Left ventricle myocardium inferior (tissue), 1 donor: ENCODE measurements at regions of chr4 and their contacts with region 1.

Region 1: DNA sequence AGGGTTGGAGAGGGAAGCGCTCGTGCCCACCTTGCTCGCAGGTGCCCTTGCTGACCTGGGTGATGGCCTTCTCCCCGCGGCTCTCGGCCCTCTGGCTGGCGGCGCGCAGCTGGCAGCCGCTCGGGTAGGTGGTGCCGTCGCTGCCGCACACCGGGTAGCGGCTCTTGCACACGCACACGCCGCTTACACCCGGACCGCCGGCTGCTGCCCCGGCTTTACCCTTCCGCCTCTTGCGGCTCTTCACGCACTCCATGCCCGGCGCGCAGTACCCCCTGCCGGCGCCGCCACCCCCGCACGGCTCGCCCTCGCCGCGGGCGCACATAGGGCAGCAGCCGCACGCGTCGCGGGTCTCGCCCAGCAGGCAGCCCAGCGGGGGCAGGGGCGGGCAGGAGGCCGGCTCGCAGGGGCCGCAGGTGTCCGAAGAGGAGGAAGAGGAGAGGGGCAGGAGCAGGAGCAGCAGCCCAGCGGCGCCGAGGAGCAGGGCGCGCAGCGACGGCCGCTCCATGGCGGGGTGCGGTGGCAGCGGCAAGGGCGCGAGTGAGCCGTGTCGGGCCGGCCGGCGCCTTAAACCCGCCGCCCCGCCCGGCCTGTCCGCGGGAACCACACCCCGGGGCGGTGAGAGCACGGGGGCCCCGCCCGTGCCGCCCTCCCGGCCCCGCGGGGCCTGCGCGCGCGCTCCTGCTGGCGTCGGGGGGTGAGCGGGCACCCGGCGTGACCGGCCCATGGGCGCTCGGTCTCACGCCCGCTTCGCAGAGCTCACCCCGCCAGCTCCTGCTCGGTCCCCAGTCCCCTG is at the start of gene IGFBP7:
- DNase-seq: peak; percentile 74
- H3K4me3 ChIP-seq: peak within 1 kb of the TSS; percentile 93
- H3K27ac ChIP-seq: peak within 1 kb of the TSS; percentile 98
- H3K4me1 ChIP-seq: peaks cover 68% of the 10 kb centered on the region
- H3K27me3 ChIP-seq: no peaks in the 10 kb centered on the region
- CTCF ChIP-seq: peak; percentile 34
- total RNA-seq, gene IGFBP7: 698 TPM

Region 2: DNA sequence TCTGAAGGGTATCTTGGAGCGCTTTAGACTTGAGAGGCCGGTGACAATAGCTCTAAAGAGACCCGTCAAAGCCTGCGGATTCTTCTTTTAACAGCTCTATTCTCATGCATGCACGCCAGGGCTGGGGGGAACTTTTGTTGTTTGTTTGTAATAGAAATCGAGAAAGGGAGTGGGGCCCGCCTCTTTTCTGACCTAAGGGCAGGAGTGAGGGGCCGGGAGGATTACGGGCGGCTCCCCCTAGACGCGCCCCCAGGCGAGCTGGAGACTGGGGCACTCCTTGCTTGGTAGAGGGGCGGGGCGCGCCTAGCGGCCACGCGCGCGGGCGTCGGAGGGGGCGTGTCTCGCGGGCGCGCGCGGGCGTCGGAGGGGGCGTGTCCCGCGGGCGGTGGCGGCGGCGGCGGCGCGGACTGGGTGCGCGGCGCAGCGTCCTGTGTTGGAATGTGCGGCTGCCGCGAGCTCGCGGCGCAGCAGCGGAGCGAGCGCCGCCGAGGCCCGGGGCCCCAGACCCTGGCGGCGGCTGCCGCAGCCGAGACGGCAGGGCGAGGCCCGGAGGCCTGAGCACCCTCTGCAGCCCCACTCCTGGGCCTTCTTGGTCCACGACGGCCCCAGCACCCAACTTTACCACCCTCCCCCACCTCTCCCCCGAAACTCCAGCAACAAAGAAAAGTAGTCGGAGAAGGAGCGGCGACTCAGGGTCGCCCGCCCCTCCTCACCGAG is 202.4 kb before region 1 on chr4 and contains the start of gene REST:
- intact Hi-C with region 1: no loop called
- DNase-seq: peak; percentile 74
- H3K4me3 ChIP-seq: peak within 1 kb of the TSS; percentile 91
- H3K27ac ChIP-seq: peak within 1 kb of the TSS; percentile 93
- H3K4me1 ChIP-seq: peaks cover 61% of the 10 kb centered on the region
- H3K27me3 ChIP-seq: no peaks in the 10 kb centered on the region
- CTCF ChIP-seq: no peak
- total RNA-seq, gene REST: 24.1 TPM

Region 3: DNA sequence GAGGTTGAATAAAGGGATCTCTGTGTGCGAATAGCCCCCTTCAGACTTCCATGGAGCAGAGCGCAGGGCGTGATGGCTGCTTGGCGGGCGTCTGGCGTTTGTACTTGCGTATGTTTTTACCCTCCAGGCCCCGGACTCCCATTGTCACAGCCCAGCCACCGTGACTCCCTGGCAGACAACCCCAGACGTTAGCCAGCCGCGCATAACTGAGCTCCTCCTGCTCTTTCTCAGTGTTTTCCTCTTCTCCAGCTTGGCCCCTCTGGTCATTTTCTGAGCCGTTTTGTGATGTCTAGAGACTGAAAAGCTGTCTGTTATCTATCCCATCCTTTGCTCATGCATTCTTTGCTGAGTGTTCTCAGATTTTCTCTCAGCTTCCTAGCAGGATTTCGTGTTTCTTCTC is 54.2 kb before region 1 on chr4:
- intact Hi-C with region 1: loop called (anchors 5 kb)
- DNase-seq: peak; percentile 42
- H3K4me3 ChIP-seq: peak overlapping the region; percentile 23
- H3K27ac ChIP-seq: peak overlapping the region; percentile 86
- H3K4me1 ChIP-seq: peaks cover 89% of the 10 kb centered on the region
- H3K27me3 ChIP-seq: no peaks in the 10 kb centered on the region
- CTCF ChIP-seq: no peak

Region 4: DNA sequence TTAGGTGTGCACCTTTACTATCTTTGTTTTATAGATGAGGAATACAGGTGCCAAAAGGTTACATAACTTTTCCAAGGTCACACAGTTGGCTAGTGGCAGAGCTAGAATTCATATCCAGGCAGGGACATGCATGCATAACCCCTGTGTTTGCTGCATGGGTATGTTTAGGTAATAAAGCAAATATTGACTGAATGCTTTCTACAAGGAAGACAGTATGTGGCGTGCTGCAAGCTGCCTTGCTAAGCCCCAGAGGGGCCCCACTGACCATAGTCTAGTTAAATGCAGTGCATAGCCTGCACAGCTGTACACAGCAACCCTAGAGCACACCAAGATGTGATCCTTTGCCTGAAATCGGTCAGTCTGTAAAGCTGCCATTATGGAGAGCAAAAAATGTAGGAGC is 320.7 kb after region 1 on chr4:
- intact Hi-C with region 1: no loop called
- DNase-seq: no peak
- H3K4me3 ChIP-seq: no peak overlapping the region
- H3K27ac ChIP-seq: no peak overlapping the region
- H3K4me1 ChIP-seq: no peaks in the 10 kb centered on the region
- H3K27me3 ChIP-seq: peaks cover 3% of the 10 kb centered on the region
- CTCF ChIP-seq: no peak